Lower leg skin (tissue), 4 donors: ENCODE measurements at regions of chr2 and their contacts with region 1.

Region 1: DNA sequence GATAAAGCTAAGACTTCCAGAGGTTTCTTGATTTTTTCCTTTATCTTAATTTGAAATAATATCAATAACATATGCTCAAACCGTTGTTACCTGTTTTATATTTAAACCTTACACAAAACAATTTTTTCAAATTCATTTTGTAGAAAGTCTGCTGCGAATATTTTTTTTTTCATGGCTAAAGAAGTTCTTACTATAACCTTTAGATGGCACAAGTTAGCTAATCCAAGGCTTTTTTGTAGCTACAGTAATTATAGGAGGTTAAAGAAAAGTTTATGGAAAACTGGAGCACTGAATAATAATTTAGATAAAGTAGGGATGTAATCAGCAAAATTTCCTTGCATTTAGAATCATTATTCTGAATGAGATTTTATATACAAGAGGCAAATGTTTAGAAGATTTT is 78.0 kb upstream of the PNPT1 start:
- DNase-seq: no peak
- H3K4me3 ChIP-seq: no peak overlapping the region
- CTCF ChIP-seq: no peak
- POLR2A ChIP-seq: no peak

Region 2: GRCh38 chr2:53802617-53803151 is 1968.9 kb before region 1 on chr2:
- intact Hi-C with region 1: no loop called
- DNase-seq: no peak
- H3K4me3 ChIP-seq: no peak overlapping the region
- CTCF ChIP-seq: no peak
- POLR2A ChIP-seq: no peak

Region 3: GRCh38 chr2:55581435-55581834 is 190.2 kb before region 1 on chr2:
- intact Hi-C with region 1: no loop called
- DNase-seq: no peak
- H3K4me3 ChIP-seq: no peak overlapping the region
- CTCF ChIP-seq: no peak
- POLR2A ChIP-seq: no peak

Region 4: GRCh38 chr2:55743583-55743982 is 28.0 kb before region 1 on chr2:
- intact Hi-C with region 1: no loop called
- DNase-seq: no peak
- H3K4me3 ChIP-seq: no peak overlapping the region
- CTCF ChIP-seq: no peak
- POLR2A ChIP-seq: no peak

Region 5: GRCh38 chr2:55961318-55961911 is 189.8 kb after region 1 on chr2:
- intact Hi-C with region 1: loop called (anchors 10 kb)
- DNase-seq: no peak
- H3K4me3 ChIP-seq: no peak overlapping the region
- CTCF ChIP-seq: no peak
- POLR2A ChIP-seq: no peak